Posterior vena cava (tissue), 2 donors: ENCODE measurements at regions of chr5 and their contacts with region 1.

Region 1: DNA sequence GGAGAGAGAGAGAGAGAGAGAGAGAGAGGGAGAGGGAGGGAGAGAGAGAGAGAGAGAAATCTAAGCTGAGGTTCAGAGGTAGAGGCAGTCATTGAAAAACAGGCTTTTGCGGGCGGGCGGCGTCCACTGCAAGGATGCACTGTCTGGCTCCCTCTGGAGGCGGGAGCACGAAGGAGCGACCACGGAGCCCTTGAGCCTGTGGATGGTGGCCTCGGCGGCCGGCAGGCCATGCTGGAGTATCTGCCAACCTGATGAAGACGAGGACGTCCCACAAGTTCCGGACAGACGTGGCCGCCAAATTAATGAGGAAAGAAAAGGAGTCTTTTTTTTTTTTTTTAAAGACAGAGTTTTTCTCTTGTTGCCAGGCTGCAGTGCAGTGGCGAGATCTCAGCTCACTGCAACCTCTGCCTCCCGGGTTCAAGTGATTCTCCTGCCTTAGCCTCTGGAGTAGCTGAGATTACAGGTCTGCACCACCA is 2.2 kb upstream of the CCDC125 start:
- DNase-seq: peak; percentile 95

Region 2: DNA sequence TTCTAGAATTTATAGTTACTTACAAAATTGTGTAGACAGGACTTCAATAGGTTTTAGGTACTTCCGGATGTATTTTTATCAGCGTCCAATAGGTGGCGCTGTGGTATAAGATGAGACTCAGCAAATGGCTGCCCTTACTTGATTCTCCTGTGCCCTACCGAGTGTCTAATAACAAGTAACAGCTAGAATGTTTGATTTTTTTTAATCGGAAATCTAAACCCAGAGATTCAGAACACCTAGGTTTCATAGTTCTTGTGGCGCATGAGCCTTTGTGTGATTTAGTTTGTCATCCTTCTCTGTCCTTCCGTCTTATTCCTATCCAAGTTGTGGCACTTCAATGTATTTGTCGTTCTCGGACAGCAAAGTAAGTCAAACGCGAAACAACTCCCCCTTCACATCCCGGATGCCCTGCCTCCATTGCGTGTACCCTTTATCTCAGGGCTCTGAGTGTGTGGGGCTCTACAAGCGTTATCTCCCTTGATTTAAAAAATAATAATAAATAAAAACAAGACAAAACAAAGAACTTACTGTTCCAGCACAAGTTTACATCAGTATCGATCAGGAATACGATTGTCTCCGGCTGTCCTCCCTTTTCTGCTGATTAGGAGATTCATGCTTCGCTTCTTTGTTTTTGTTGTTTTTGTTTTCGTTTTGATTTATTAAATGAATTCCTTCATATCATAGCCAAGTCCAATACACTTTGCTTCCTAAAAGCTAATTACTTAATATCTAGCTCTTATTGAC is 291.7 kb before region 1 on chr5:
- intact Hi-C with region 1: loop called in 1 of 2 experiments (anchors 10 kb)
- DNase-seq: no peak

Region 3: DNA sequence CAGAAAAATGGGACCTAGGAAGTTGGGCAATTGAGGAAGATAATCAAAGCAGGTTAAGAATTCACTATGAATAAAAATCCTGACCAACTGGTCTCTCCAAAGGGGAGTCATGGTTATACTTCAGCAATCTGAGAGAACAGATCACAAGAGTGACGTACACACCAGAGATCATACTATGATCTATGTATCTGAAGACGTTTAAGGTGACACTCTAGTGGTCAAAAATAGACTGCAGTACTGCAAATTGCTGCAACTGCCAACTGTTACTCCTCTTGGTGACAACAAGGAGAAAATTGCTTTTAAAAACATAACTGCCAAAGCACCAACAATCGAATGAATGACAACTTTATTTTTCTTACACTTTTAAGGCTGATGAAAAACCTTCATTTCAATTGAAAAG is 29.6 kb after region 1 on chr5:
- intact Hi-C with region 1: no loop called
- DNase-seq: no peak